GM13977 (cell line): ENCODE measurements at regions of chr9 and their contacts with region 1.

Region 1: GRCh38 chr9:15873569-15874177 is 320.8 kb downstream of the CCDC171 start:
- DNase-seq: peak; percentile 6
- CTCF ChIP-seq: peak; percentile 60

Region 2: GRCh38 chr9:14710804-14711203 is 1162.9 kb before region 1 on chr9:
- in situ Hi-C with region 1: no loop called
- DNase-seq: no peak
- CTCF ChIP-seq: no peak

Region 3: GRCh38 chr9:15531380-15531779 is 342.3 kb before region 1 on chr9:
- in situ Hi-C with region 1: no loop called
- DNase-seq: peak; percentile 50
- CTCF ChIP-seq: no peak

Region 4: GRCh38 chr9:16133556-16134227 is 260.0 kb after region 1 on chr9:
- in situ Hi-C with region 1: loop called (anchors 25 kb)
- DNase-seq: peak; percentile 65
- CTCF ChIP-seq: peak; percentile 66